Calu3 (cell line): ENCODE measurements at regions of chr6 and their contacts with region 1.

Region 1: DNA sequence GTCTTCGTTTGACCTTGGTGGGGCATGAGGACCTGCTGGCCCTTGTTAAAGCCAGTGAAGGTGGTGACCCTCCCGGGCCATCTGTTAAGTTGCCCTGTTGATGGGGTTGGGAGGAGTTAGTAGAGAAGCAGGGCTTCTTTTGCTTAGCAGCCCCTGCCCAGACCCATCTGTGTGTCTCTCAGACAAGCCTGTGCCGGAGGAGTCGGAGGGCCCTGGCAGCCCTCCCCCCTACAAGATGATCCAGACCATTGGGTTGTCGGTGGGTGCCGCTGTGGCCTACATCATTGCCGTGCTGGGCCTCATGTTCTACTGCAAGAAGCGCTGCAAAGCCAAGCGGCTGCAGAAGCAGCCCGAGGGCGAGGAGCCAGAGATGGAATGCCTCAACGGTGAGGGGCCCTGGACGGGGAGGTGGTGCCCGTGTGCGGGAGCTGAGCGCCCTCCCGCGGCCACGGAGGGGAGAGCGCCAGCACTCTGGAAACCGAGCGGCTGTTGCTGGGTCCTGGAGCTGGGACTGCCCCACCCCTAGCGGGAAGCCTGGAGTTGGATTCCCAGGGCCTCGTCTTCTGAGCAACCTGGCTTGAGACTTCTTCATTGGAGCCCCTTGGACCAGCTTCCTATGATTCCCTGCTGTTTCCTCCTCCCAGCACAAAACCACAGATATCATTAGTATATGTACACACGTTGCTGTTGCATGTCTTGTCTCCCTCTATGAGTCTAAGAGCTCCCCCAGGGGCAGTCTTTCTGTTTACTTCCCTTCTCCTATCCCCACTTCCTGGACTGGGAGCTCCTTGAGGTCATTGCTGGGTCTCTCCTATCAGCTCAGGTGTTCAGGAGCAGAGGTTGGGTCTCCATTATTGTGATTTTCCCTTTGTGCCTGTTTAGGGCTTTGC is 27.6 kb upstream of the SRF start:
- DNase-seq: peak; percentile 94
- H3K4me3 Mint-ChIP-seq: no peak overlapping the region
- H3K27ac Mint-ChIP-seq: peak overlapping the region; percentile 7
- H3K4me1 Mint-ChIP-seq: peaks cover 9% of the 10 kb centered on the region
- H3K27me3 Mint-ChIP-seq: no peaks in the 10 kb centered on the region
- CTCF ChIP-seq: peak; percentile 98

Region 2: DNA sequence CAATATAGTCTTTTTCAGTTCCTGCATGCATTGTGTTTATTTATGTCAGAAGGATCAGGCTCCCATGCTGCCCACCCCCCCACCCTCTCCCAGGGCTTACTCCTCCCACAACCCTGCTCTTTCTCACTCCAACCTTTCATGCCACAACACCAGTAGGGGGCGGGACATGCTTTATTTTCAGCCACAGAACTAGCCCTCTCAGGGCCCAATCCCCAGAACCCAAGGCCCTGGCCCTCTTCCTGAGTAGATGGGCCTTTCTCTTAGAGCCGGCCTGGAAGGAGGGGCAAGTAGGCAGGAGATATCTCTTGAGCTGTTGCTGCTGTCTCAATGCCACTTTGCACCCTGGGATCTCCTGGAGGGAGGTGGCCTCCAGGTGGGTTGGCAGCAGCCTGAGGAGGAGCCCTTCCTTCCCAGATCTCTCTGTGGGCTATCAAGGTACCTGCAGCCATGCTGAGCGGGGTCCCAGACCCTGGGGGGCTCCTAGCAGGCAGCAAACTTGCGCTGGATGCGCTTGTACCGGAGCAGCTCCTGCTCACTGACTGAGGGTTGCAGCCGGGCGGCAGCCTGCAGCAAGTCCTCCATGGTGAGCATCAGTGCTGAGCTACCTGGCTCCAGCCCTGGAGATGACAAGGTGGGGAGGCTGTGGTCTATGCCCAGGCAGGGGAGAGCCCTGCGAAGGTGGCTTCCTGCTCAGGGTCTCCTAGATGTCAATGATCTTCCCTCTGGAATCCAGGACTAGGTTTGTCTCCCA is 179.4 kb before region 1 on chr6:
- CTCF ChIA-PET with region 1: no interaction called
- intact Hi-C with region 1: loop called (anchors 5 kb)
- DNase-seq: peak; percentile 62
- H3K4me3 Mint-ChIP-seq: no peak overlapping the region
- H3K27ac Mint-ChIP-seq: no peak overlapping the region
- H3K4me1 Mint-ChIP-seq: peaks cover 23% of the 10 kb centered on the region
- H3K27me3 Mint-ChIP-seq: peaks cover 18% of the 10 kb centered on the region
- CTCF ChIP-seq: no peak

Region 3: GRCh38 chr6:43013843-43014433 is 129.5 kb before region 1 on chr6 and contains the starts of genes KLHDC3 and MEA1:
- CTCF ChIA-PET with region 1: interaction called, 15 read pairs
- intact Hi-C with region 1: loop called (anchors 2 kb)
- DNase-seq: peak; percentile 100
- H3K4me3 Mint-ChIP-seq: peak within 1 kb of the TSS; percentile 97
- H3K27ac Mint-ChIP-seq: peak within 1 kb of the TSS; percentile 85
- H3K4me1 Mint-ChIP-seq: peaks cover 28% of the 10 kb centered on the region
- H3K27me3 Mint-ChIP-seq: no peaks in the 10 kb centered on the region
- CTCF ChIP-seq: no peak
- total RNA-seq, gene KLHDC3: 85.9 and 95.7 TPM in 2 replicates
- total RNA-seq, gene MEA1: 110 and 115 TPM in 2 replicates

Region 4: DNA sequence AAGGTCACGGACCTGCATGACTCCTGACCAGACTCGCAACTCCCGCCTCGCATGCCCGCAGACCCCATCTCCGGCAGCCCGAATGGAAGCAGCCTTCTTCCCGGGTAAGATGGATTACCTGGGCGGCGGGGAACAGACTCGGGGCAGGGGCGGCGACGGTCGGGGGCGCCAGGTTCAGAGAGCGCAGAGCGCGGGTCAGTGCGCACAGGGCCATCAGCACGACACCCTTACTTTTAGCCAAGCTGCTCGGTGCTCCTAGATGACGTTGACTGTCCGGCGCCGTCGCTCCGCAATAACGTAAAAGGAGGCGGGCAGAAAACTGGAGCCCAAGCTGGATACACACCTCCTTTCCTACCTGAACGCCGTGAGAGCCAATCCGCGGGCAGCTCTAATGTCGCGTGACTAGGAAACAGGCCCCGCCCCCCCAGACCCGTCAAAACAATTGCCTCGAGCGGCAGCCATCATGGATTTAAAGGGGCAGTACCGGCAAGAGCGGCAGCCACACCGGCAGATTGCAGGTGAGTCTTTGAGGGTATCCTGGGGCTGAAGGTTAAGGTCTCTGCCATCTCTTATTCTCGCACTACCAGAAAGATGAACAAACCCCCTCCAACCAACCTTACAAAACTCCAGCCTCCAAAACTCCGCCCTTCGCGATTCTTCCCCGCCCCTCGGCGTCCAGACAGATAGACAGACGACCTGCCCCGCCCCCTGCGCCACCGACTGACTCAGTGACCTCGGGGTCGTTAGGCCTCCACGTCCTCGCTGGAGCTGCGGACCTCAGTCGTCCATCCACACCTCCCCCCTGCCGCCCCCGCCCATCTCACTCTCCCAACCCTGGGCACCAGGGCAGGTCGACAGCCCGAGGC is 84.1 kb before region 1 on chr6 and contains the starts of genes KLC4 and MRPL2:
- CTCF ChIA-PET with region 1: interaction called, 20 read pairs
- intact Hi-C with region 1: no loop called
- DNase-seq: peak; percentile 99
- H3K4me3 Mint-ChIP-seq: peak within 1 kb of the TSS; percentile 90
- H3K27ac Mint-ChIP-seq: peak within 1 kb of the TSS; percentile 83
- H3K4me1 Mint-ChIP-seq: peaks cover 27% of the 10 kb centered on the region
- H3K27me3 Mint-ChIP-seq: no peaks in the 10 kb centered on the region
- CTCF ChIP-seq: no peak
- total RNA-seq, gene KLC4: 42.1 and 50.7 TPM in 2 replicates
- total RNA-seq, gene MRPL2: 125 and 135 TPM in 2 replicates

Region 5: GRCh38 chr6:43129434-43130194 is 13.9 kb before region 1 on chr6:
- CTCF ChIA-PET with region 1: interaction called, 16 read pairs
- intact Hi-C with region 1: no loop called
- DNase-seq: peak; percentile 72
- H3K4me3 Mint-ChIP-seq: no peak overlapping the region
- H3K27ac Mint-ChIP-seq: no peak overlapping the region
- H3K4me1 Mint-ChIP-seq: peaks cover 8% of the 10 kb centered on the region
- H3K27me3 Mint-ChIP-seq: no peaks in the 10 kb centered on the region
- CTCF ChIP-seq: peak; percentile 73

Region 6: DNA sequence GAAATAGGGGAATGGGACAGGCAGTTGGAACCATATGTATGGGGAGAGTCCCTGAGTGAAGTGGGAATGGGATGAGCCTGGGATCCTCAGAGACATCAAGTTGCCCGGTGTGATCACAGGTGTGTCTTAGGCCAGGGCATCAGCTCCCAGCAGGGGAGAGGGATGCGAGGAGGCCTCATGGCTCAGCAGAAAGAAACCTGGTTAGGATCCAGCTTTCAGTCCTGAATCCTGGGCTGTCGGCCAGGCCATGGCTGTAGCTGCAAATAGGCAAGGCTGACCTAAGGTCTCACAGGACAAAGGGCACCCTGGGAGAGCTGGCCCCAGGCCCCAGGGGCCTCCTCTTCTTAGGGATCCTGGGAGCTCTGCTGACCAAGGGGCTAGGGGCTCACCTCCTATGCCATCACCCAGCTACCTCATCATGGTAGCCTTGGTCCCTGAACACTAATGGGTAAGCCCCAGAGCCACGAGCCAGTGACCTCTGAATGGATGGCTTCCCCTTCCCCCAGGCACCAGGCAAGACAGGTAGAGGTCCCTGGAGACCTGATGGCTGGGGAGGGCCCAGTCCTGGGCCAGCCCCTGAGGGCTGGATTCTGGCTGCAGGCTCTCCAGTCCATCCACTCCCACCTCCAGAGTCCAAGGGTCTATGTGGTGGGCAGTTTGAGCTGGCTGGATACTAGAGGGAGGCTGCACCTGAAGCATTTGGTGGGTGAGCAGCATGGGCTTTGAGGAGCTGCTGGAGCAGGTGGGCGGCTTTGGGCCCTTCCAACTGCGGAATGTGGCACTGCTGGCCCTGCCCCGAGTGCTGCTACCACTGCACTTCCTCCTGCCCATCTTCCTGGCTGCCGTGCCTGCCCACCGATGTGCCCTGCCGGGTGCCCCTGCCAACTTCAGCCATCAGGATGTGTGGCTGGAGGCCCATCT is 154.4 kb after region 1 on chr6 and contains the start of gene SLC22A7:
- CTCF ChIA-PET with region 1: no interaction called
- intact Hi-C with region 1: no loop called
- DNase-seq: no peak
- H3K4me3 Mint-ChIP-seq: no peak within 1 kb of the TSS
- H3K27ac Mint-ChIP-seq: no peak within 1 kb of the TSS
- H3K4me1 Mint-ChIP-seq: no peaks in the 10 kb centered on the region
- H3K27me3 Mint-ChIP-seq: peaks cover 40% of the 10 kb centered on the region
- CTCF ChIP-seq: no peak
- total RNA-seq, gene SLC22A7: not detected in 2 replicates